CD4-positive, alpha-beta memory T cell (primary cell): ENCODE measurements at regions of chr17 and their contacts with region 1.

Region 1: DNA sequence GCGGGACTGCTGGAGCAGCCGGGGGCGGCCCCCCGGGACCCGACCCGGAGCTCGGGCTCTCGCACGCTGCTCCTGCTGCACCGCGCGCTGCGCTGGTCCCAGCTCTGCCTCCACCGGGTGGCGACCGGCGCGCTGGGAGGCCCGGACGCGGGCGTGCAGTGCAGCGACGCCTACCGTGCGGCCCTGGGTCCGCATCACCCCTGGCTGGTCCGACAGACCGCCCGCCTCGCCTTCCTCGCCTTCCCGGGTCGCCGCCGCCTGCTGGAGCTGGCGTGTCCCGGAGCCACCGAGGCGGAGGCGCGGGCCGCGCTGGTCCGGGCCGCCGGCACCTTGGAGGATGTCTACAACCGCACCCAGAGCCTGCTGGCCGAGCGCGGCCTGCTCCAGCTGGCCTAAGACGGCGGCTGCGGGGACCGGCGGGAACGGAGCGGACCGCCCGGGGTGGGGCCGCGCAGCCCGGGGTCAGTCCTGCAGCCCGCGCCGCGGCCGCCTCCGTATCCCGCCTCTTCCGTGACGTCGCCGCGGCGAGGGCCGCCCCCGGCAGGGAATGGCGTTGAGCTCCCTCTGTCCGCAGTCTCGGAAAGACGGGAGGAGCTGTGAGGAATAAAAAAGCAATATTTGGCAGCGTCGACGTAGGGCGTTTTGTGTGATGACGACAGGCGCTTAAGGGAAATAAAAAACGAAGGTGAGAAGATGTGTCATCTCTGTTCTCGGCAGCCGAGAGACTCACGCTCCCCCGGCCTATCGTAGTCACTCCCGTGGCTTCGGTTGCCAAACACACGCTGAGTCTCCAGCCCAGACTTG is 1.3 kb downstream of the GLTPD2 start:
- DNase-seq: peak; percentile 77 to 87 (median 80)
- H3K4me3 ChIP-seq: peak overlapping the region; percentile 49 to 60
- H3K4me3 Mint-ChIP-seq: peak overlapping the region; percentile 88 to 94 (median 90)
- H3K27ac ChIP-seq: peak overlapping the region; percentile 72
- H3K27ac Mint-ChIP-seq: peak overlapping the region; percentile 63 to 96 (median 88)
- H3K4me1 ChIP-seq: peaks cover 26% of the 10 kb centered on the region
- H3K4me1 Mint-ChIP-seq: peaks cover 12 to 41% (median 15%) of the 10 kb centered on the region in 4 donors
- H3K27me3 ChIP-seq: peaks cover 11% of the 10 kb centered on the region
- H3K27me3 Mint-ChIP-seq: peaks cover 22 to 23% of the 10 kb centered on the region in 2 donors

Region 2: GRCh38 chr17:4715063-4715744 is 74.9 kb before region 1 on chr17:
- CTCF ChIA-PET with region 1: interaction called, 59 read pairs
- POLR2A ChIA-PET with region 1: interaction called, 81 read pairs
- intact Hi-C with region 1: loop called (anchors 1 kb)
- DNase-seq: peak; percentile 53 to 79 (median 56)
- H3K4me3 ChIP-seq: peak overlapping the region; percentile 37 to 57
- H3K4me3 Mint-ChIP-seq: peak overlapping the region; percentile 74 to 93 (median 84)
- H3K27ac ChIP-seq: peak overlapping the region; percentile 50
- H3K27ac Mint-ChIP-seq: peak overlapping the region; percentile 86 to 98 (median 96)
- H3K4me1 ChIP-seq: peaks cover 54% of the 10 kb centered on the region
- H3K4me1 Mint-ChIP-seq: peaks cover 31 to 52% (median 42%) of the 10 kb centered on the region in 4 donors
- H3K27me3 ChIP-seq: no peaks in the 10 kb centered on the region
- H3K27me3 Mint-ChIP-seq: no peaks in the 10 kb centered on the region

Region 3: DNA sequence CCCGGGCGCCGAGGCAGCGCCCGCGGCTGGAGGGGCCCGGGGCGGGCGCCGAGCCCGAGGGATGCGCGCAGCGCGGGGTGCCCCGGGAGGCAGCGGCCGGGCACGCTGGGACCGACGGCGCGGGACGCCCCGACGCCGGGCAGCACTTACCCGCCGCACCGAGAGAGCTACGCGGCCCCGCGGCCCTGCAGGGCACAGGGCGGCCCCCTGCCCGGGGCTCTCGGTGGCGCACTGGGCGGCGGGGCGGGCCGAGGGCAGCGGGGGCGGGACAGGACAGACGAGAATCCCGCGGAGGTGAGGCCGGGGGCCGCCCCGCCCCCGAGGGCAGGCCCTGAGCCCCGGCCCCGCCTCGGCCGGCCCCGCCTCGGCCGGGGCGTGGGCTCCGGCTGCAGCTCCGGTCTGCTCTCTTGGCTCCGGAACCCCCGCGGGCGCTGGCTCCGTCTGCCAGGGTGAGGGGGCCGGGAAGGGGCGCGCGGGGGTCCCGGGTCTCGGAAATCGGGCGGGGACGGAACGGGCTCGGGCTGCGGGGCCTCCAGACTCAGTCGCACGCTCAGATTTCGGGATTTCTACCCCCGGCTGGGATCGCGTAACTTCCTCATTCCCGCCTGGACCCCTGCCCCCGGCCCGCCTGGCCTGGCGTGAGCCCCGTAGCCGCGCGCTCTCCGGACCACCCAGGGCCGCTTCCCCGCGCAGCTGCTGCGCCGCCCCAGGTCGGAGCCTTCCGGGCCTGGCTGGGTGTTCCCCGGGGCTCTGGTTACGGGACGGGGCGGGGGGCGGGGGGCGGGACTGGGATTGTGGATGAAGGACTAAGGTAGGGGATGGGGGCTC is 16.9 kb after region 1 on chr17 and contains the start of gene PLD2:
- CTCF ChIA-PET with region 1: interaction called, 21 read pairs
- POLR2A ChIA-PET with region 1: interaction called, 42 read pairs
- intact Hi-C with region 1: loop called (anchors 1 kb)
- DNase-seq: peak; percentile 84 to 87 (median 85)
- H3K4me3 ChIP-seq: peak within 1 kb of the TSS; percentile 47 to 54
- H3K4me3 Mint-ChIP-seq: peak within 1 kb of the TSS; percentile 69 to 85 (median 82)
- H3K27ac ChIP-seq: peak within 1 kb of the TSS; percentile 67
- H3K27ac Mint-ChIP-seq: peak within 1 kb of the TSS; percentile 23 to 83 (median 60)
- H3K4me1 ChIP-seq: peaks cover 15% of the 10 kb centered on the region
- H3K4me1 Mint-ChIP-seq: peaks cover 3 to 23% (median 10%) of the 10 kb centered on the region in 4 donors
- H3K27me3 ChIP-seq: no peaks in the 10 kb centered on the region
- H3K27me3 Mint-ChIP-seq: no peaks in the 10 kb centered on the region
- total RNA-seq, gene PLD2: 30.8 to 37.5 TPM

Region 4: DNA sequence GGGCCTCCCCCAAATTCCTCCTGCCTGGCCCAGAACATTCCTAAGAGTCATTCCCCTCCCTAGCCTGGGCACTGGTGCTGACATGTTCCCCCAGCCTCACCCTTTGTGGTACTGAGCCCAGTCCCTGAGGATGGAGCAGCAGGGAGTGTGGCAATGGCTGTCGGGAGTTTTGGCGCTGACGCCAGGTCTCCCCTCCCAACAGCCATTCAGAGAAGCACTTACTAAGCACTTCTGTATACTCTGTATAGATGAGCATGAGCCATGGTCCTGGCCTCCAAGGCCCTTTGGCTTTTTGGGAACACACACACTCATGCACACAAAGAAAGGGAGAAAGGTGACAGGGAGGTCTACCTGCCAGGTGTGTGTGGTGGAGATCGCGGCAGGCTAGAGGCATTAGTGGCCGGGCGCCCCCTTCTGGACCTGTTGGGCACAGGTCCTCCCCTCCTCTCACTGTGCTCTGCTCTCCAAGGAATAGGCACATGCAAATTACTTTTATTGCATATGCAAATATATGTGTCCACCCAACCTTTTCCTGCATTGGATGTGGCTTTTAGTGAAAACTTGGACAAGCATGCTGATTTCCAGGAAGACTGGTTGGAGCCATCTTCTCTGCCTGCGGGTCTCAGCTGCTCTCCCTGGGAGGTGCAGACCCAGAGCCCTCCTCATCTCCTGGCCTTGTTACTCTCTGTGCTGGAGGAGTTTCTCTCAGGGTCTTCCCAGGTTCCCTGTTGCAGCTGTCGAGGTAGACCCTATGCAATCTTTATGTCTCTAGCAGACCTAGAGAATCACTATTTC is 91.9 kb after region 1 on chr17:
- CTCF ChIA-PET with region 1: interaction called, 13 read pairs
- POLR2A ChIA-PET with region 1: interaction called, 7 read pairs
- intact Hi-C with region 1: no loop called
- DNase-seq: peak in 4 of 5 donors; percentile 64 to 69 (median 65)
- H3K4me3 ChIP-seq: no peak overlapping the region
- H3K4me3 Mint-ChIP-seq: no peak overlapping the region
- H3K27ac ChIP-seq: no peak overlapping the region
- H3K27ac Mint-ChIP-seq: peak overlapping the region in 2 of 7 donors; percentile 29 to 37
- H3K4me1 ChIP-seq: no peaks in the 10 kb centered on the region
- H3K4me1 Mint-ChIP-seq: peaks cover 0 to 3% (median 0%) of the 10 kb centered on the region in 4 donors
- H3K27me3 ChIP-seq: no peaks in the 10 kb centered on the region
- H3K27me3 Mint-ChIP-seq: no peaks in the 10 kb centered on the region

Region 5: GRCh38 chr17:4903051-4903818 is 113.1 kb after region 1 on chr17 and contains the start of gene CHRNE:
- CTCF ChIA-PET with region 1: interaction called, 23 read pairs
- POLR2A ChIA-PET with region 1: interaction called, 15 read pairs
- intact Hi-C with region 1: no loop called
- DNase-seq: peak; percentile 75 to 87 (median 79)
- H3K4me3 ChIP-seq: no peak within 1 kb of the TSS
- H3K4me3 Mint-ChIP-seq: peak within 1 kb of the TSS; percentile 24 to 80 (median 69)
- H3K27ac ChIP-seq: no peak within 1 kb of the TSS
- H3K27ac Mint-ChIP-seq: peak within 1 kb of the TSS; percentile 83 to 94 (median 90)
- H3K4me1 ChIP-seq: peaks cover 41% of the 10 kb centered on the region
- H3K4me1 Mint-ChIP-seq: peaks cover 19 to 45% (median 37%) of the 10 kb centered on the region in 4 donors
- H3K27me3 ChIP-seq: no peaks in the 10 kb centered on the region
- H3K27me3 Mint-ChIP-seq: peaks cover 0 to 2% of the 10 kb centered on the region in 2 donors
- total RNA-seq, gene CHRNE: 0.64 to 1.3 TPM